Activated CD8-positive, alpha-beta T cell treated with anti-CD3 and anti-CD28 coated beads, Interleukin-2, amount 10 ng/mL, durations not matched to agents 7 days and 5 days (primary cell): ENCODE measurements at regions of chr1 and their contacts with region 1.

Region 1: GRCh38 chr1:28208818-28209441 is 23.9 kb downstream of the DNAJC8 start:
- DNase-seq: peak; percentile 82
- ATAC-seq: peak; percentile 91
- H3K4me3 Mint-ChIP-seq: no peak overlapping the region
- H3K27ac Mint-ChIP-seq: no peak overlapping the region
- H3K4me1 Mint-ChIP-seq: peaks cover 12% of the 10 kb centered on the region
- H3K27me3 Mint-ChIP-seq: no peaks in the 10 kb centered on the region

Region 2: DNA sequence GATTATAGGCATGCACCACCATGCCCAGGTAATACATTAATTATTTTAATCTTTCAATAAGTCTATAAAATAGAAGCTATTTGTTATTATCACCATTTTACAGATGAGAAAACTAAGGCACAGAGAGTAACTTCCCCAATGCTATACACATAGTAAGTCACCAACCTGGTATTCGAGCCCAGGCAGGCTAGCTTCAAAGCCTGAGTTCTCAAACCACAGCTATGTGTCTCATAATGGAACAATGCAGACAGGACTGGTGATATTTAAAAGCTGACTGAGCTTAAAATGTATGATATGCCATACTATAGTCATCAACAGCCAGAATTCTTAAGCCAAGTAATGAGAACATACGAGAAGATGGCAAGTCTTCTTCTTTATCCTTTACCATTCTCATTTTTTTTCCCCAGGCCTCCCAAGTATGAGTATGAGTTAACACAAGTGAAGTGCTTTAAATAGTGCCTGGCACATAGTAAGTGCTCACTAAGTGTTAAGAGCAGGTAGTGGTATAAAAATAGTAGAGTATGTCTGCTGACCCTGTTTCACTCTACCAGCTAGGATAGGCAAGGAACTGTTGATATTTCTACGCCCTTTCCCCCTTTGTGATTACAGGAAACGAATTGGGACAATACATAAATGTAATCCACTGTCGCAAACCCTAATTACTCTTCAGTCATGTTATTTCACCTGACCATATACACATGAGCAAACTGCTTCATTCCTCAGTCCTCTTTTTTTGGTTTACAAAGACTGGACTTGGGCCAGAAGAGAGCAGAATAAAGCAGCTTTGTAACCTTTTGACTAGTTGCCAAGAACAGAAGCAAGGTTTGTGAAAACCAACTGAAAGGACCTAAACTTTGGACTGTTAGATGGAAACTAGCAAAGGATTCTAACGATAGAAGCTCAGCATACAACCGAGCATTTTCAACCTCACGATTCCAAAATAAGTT is 130.0 kb before region 1 on chr1:
- CTCF ChIA-PET with region 1: interaction called, 13 read pairs
- POLR2A ChIA-PET with region 1: no interaction called
- DNase-seq: no peak
- ATAC-seq: no peak
- H3K4me3 Mint-ChIP-seq: no peak overlapping the region
- H3K27ac Mint-ChIP-seq: no peak overlapping the region
- H3K4me1 Mint-ChIP-seq: peaks cover 16% of the 10 kb centered on the region
- H3K27me3 Mint-ChIP-seq: no peaks in the 10 kb centered on the region

Region 3: GRCh38 chr1:28112388-28113241 is 96.3 kb before region 1 on chr1:
- CTCF ChIA-PET with region 1: interaction called, 14 read pairs
- POLR2A ChIA-PET with region 1: no interaction called
- DNase-seq: no peak
- ATAC-seq: no peak
- H3K4me3 Mint-ChIP-seq: no peak overlapping the region
- H3K27ac Mint-ChIP-seq: no peak overlapping the region
- H3K4me1 Mint-ChIP-seq: peaks cover 35% of the 10 kb centered on the region
- H3K27me3 Mint-ChIP-seq: peaks cover 11% of the 10 kb centered on the region

Region 4: DNA sequence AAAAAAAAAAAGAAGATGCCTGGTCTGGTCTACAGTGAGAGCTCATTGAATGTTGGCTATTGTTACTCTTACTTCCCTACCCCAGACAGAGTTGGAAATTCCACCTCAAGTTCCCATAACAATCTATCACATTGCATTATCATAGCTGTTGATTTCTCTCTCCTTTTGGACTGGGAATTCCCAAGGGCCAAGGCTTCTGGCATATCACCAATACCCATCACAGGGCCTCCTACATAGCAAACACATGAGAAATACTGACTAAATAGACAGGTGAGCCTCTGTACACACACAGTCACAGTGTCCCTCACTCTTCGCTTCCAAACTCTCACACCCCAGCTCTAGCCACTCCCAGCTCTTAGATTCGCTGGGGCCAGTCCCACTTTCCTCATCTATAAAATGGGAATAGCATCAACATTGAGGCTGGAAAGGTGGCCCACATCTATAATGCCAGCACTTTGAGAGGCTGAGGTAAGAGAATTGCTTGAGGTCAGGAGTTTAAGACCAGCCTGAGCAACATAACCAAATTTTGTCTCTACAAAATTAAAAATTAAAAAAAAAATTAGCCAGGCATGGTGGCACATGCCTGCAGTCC is 38.8 kb before region 1 on chr1:
- CTCF ChIA-PET with region 1: interaction called, 10 read pairs
- POLR2A ChIA-PET with region 1: no interaction called
- DNase-seq: no peak
- ATAC-seq: no peak
- H3K4me3 Mint-ChIP-seq: no peak overlapping the region
- H3K27ac Mint-ChIP-seq: no peak overlapping the region
- H3K4me1 Mint-ChIP-seq: peaks cover 58% of the 10 kb centered on the region
- H3K27me3 Mint-ChIP-seq: peaks cover 21% of the 10 kb centered on the region